CD8-positive, alpha-beta T cell (primary cell): ENCODE measurements at regions of chr12 and their contacts with region 1.

Region 1: DNA sequence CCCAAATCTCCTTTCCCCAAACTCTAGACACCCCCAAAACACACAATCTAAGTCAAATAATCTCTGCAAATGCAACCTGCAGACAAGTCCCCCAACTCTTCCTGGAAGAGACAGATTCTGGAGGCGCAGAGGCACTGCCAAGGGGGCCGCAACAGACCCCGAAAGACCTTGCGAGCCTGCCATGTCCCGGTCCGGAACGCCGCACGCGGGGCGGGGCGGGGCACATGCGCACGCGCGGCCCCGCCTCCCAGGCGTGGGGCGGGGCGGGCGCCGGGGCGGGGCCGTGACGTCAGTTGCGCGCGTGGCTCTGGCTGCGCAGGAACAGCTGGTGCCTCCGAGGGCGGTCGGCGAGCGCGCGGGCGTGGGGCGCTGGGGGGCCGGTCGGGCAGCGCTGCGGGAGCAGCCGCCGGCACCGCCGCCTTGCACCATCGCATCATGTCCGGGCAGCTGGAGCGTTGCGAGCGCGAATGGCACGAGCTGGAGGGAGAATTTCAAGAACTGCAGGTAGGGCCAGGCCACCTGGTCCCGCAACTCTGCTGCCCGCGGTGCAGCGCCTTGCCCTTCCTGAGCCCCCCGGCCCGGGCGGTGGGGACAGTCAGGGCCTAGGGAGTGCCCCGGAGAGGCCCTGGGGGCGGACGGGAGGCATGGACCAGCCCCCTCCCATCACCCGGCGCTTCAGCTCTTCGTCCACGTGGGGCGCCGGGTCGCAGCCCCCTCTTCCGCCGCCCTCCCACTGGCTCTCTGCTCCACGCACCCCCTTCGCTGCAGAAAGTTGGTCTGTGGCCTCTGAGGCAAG is at the start of gene TMEM120B:
- DNase-seq: peak; percentile 70 to 92 (median 85)
- ATAC-seq: peak; percentile 92
- H3K4me3 ChIP-seq: peak within 1 kb of the TSS; percentile 96 to 100
- H3K4me3 Mint-ChIP-seq: peak within 1 kb of the TSS; percentile 92
- H3K27ac ChIP-seq: peak within 1 kb of the TSS; percentile 73 to 89
- H3K27ac Mint-ChIP-seq: peak within 1 kb of the TSS; percentile 91
- H3K4me1 ChIP-seq: peaks cover 17% of the 10 kb centered on the region
- H3K4me1 Mint-ChIP-seq: peaks cover 31% of the 10 kb centered on the region
- H3K27me3 ChIP-seq: no peaks in the 10 kb centered on the region
- H3K27me3 Mint-ChIP-seq: no peaks in the 10 kb centered on the region
- CTCF ChIP-seq: no peak
- total RNA-seq, gene TMEM120B: 6.4 to 7.3 TPM

Region 2: DNA sequence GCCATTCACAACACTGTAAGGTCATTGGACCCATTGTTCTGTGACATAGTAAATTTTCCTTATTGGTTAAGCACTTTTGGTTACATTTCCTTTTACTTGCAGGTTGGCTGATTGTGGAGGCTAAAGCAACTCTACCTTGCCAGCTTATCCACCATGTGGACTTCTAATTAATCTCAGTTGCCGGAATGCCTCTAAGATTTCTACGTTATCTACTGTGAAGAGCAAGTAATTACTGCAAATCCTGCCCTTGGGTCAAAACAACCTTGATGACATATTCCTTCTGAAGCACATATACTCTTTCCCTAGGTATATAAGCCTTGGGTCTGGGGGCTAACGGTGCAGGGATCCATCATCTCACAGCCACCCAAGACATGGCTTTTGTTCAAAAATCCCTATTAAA is 23.7 kb before region 1 on chr12:
- CTCF ChIA-PET with region 1: no interaction called
- POLR2A ChIA-PET with region 1: interaction called, 3 read pairs
- intact Hi-C with region 1: loop called (anchors 1 to 2 kb)
- DNase-seq: no peak
- ATAC-seq: no peak
- H3K4me3 ChIP-seq: no peak overlapping the region
- H3K4me3 Mint-ChIP-seq: no peak overlapping the region
- H3K27ac ChIP-seq: no peak overlapping the region
- H3K27ac Mint-ChIP-seq: no peak overlapping the region
- H3K4me1 ChIP-seq: peaks cover 5% of the 10 kb centered on the region
- H3K4me1 Mint-ChIP-seq: peaks cover 8% of the 10 kb centered on the region
- H3K27me3 ChIP-seq: no peaks in the 10 kb centered on the region
- H3K27me3 Mint-ChIP-seq: no peaks in the 10 kb centered on the region
- CTCF ChIP-seq: no peak

Region 3: DNA sequence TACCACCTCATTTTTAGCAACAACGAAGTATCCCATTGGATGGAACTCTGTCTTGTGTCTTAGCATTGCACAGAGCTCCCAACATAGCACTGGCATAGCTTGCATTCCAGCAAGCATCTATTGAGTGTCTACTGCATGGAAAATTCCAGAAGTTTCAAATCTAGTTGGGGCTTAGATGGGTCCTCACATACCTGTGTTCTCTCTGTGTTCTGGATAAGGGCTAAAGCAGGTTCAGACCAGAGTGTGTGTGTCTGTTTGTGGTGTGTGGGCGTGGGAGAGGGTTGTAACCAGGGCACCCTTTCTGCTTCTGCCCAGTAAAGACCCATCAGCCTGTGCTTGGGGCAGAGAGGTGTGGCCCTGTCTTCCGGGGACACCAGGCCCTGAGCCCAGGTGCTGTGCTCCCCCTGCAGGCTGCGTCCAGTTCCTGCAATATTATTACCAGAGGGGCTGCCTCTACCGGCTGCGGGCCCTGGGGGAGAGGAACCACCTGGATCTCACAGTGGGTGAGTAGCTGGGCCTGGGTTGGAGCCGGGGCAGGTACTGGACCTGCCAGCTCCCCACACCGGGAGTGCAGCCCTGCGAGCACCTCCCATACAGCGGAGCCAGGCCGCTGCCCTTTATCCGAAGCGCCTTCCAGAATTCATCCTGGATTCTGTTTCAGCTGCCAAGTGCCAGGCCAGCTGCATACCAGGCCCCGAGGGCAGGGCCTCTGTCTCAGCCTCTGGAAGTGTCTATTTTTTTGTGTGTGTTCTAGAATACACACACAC is 60.5 kb after region 1 on chr12:
- CTCF ChIA-PET with region 1: interaction called, 14 read pairs
- POLR2A ChIA-PET with region 1: interaction called, 10 read pairs
- intact Hi-C with region 1: loop called in 1 of 2 experiments (anchors 1 kb)
- DNase-seq: peak; percentile 63 to 88 (median 80)
- ATAC-seq: peak; percentile 90
- H3K4me3 ChIP-seq: no peak overlapping the region
- H3K4me3 Mint-ChIP-seq: no peak overlapping the region
- H3K27ac ChIP-seq: peak overlapping the region in 1 of 2 experiments; percentile 32
- H3K27ac Mint-ChIP-seq: peak overlapping the region; percentile 57
- H3K4me1 ChIP-seq: peaks cover 29% of the 10 kb centered on the region
- H3K4me1 Mint-ChIP-seq: peaks cover 16% of the 10 kb centered on the region
- H3K27me3 ChIP-seq: no peaks in the 10 kb centered on the region
- H3K27me3 Mint-ChIP-seq: no peaks in the 10 kb centered on the region
- CTCF ChIP-seq: peak; percentile 82

Region 4: GRCh38 chr12:121802846-121803630 is 90.4 kb after region 1 on chr12:
- CTCF ChIA-PET with region 1: no interaction called
- POLR2A ChIA-PET with region 1: interaction called, 27 read pairs
- intact Hi-C with region 1: no loop called
- DNase-seq: peak; percentile 79 to 95 (median 88)
- ATAC-seq: peak; percentile 43
- H3K4me3 ChIP-seq: peak overlapping the region; percentile 73 to 82
- H3K4me3 Mint-ChIP-seq: peak overlapping the region; percentile 94
- H3K27ac ChIP-seq: peak overlapping the region; percentile 94 to 98
- H3K27ac Mint-ChIP-seq: peak overlapping the region; percentile 99
- H3K4me1 ChIP-seq: peaks cover 34% of the 10 kb centered on the region
- H3K4me1 Mint-ChIP-seq: peaks cover 28% of the 10 kb centered on the region
- H3K27me3 ChIP-seq: no peaks in the 10 kb centered on the region
- H3K27me3 Mint-ChIP-seq: no peaks in the 10 kb centered on the region
- CTCF ChIP-seq: no peak

Region 5: DNA sequence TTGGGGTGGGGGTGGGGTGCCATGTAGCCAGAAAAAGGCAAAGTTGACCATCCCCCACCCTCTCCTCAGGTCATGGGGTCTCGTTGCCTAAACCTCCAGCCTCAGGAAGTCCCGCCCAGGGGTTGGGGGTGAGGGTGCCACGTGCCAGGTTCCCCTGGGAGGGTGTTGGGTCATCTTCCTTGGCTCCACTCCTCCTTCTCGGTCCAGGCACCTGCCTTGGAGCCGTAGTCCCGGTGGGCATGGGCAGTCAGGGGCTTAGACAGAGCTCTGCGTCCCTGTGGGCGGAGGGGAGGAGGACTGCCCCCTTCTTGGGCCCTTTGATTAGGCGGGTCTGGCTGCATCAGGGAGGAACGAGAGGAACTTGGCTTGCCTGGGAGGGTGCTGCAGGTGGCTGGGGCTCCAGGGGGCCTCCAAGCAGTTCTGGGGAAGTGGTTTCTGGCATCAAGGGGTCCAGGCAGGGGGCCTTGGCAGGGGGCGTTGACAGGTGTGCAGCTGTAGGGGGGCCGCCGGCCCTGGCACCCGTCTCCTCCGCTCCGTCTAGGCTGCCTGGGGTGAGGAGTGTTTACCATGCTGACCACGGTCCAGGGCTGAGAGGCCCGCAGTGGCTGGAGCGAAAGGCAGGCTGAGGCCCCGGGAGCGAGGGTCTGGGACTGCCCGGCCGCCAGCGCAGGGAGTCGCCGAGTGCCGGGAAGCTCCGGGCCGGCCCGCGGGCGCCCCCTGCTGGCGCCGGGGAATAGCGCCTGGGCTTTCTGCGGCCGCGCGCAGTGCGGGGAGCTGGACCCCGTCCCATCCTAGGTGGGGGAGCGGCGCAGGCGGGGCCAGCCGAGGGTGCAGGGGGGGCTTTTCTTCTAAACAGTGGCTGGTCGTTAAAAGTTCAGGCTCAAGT is 99.0 kb after region 1 on chr12:
- CTCF ChIA-PET with region 1: interaction called, 5 read pairs
- POLR2A ChIA-PET with region 1: interaction called, 12 read pairs
- intact Hi-C with region 1: no loop called
- DNase-seq: peak; percentile 51 to 86 (median 68)
- ATAC-seq: peak; percentile 70
- H3K4me3 ChIP-seq: peak overlapping the region; percentile 52 to 74
- H3K4me3 Mint-ChIP-seq: peak overlapping the region; percentile 83
- H3K27ac ChIP-seq: peak overlapping the region in 1 of 2 experiments; percentile 40
- H3K27ac Mint-ChIP-seq: peak overlapping the region; percentile 89
- H3K4me1 ChIP-seq: peaks cover 50% of the 10 kb centered on the region
- H3K4me1 Mint-ChIP-seq: peaks cover 57% of the 10 kb centered on the region
- H3K27me3 ChIP-seq: no peaks in the 10 kb centered on the region
- H3K27me3 Mint-ChIP-seq: no peaks in the 10 kb centered on the region
- CTCF ChIP-seq: peak; percentile 96

Region 6: GRCh38 chr12:121839106-121839992 is 126.7 kb after region 1 on chr12:
- CTCF ChIA-PET with region 1: no interaction called
- POLR2A ChIA-PET with region 1: no interaction called
- intact Hi-C with region 1: loop called (anchors 1 kb)
- DNase-seq: peak; percentile 99 to 100 (median 100)
- ATAC-seq: peak; percentile 97
- H3K4me3 ChIP-seq: peak overlapping the region; percentile 73 to 95
- H3K4me3 Mint-ChIP-seq: peak overlapping the region; percentile 97
- H3K27ac ChIP-seq: peak overlapping the region; percentile 34 to 54
- H3K27ac Mint-ChIP-seq: peak overlapping the region; percentile 88
- H3K4me1 ChIP-seq: peaks cover 7% of the 10 kb centered on the region
- H3K4me1 Mint-ChIP-seq: peaks cover 13% of the 10 kb centered on the region
- H3K27me3 ChIP-seq: no peaks in the 10 kb centered on the region
- H3K27me3 Mint-ChIP-seq: no peaks in the 10 kb centered on the region
- CTCF ChIP-seq: peak; percentile 27